ENCODE measurements at regions of chr2 and their contacts with region 1.

Region 1: GRCh38 chr2:39234754-39235153 is 9.0 kb downstream of the CDKL4 start:
- DNase-seq: no peak
- ATAC-seq: no peak

Region 2: DNA sequence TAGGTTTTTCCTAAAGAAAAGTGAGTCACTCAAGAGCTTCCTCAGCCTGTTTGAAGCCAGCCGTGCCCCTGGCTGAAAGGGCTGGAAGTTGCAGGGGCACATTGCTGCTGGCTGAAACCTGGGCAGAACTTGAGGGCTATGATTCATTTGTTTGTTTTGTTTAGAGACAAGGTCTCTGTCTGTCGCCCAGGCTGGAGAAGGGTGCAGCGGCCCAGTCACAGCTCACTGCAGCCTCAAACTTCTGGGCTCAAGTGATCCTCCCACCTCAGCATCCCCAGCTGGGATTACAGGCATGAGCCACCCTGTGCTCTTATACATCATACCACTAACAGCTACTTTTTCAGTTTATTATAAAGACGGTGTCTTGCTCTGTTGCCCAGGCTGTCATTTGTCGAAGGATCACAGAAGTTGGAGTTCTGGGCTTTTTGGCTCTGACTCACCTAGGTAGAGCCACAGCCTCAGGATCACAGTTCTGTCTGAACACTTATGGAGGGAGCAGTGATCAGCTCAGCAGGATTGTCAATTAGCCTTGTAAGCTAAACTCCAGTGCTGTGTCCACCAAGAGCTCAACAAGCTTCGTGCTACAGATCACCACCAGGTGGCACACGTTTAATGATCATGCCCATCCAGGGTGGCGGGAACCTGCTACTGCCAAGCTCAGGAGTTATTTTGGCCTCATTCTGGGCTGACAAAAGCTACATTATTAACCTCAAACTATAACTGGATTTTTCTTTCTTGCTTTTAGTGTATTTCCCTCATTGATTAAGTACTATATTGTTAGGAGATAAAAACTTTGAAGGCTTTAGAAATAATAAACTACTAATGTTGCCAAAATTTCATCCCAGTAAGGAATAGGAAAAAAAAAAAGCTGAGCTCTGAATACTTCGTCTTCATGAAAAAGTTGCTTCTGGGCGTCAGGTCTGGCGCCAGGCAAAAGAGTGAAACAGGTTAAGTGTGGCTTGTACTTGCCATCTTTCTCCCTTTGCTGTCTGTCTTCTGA is 287.2 kb before region 1 on chr2:
- intact Hi-C with region 1: loop called (anchors 5 kb)
- DNase-seq: peak; percentile 75
- ATAC-seq: peak; percentile 72

Region 3: DNA sequence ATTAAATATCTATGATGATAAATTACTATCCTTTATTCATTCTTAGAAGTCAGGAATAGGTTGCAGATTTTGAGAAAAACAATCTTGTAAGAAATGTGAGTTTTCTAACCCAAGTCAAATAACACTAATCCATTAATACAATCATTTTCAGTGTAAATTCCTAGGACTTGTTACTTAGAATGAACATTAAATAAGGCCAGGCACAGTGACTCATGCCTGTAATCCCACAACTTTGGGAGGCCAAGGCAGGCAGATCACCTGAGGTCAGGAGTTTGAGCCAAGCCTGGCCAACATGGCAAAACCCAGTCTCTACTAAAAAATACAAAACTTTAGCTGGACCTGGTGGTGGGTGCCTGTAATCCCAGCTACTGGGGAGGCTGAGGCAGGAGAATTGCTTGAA is 54.9 kb after region 1 on chr2:
- intact Hi-C with region 1: no loop called
- DNase-seq: no peak
- ATAC-seq: no peak

Region 4: DNA sequence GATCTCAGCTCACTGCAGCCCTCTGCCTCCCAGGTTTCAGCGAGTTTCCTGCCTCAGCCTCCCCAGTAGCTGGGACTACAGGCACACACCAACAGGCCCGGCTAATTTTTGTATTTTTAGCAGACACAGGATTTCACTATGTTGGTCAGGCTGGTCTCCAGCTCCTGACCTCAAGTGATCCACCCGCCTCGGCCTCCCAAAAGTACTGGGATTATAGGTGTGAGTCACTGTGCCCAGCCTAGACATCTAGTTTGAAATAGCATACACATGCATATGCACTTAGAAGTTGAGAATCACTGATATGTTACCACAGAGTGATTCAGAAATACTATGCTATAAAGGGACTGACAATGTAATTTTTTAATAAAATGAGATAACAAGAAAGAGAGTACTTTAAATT is 78.8 kb after region 1 on chr2:
- intact Hi-C with region 1: no loop called
- DNase-seq: no peak
- ATAC-seq: no peak